Naive thymus-derived CD4-positive, alpha-beta T cell (primary cell): ENCODE measurements at regions of chr11 and their contacts with region 1.

Region 1: GRCh38 chr11:95790123-95790932 is at the start of gene CEP57:
- DNase-seq: peak; percentile 80 to 98 (median 96)
- ATAC-seq: peak; percentile 70
- H3K4me3 ChIP-seq: peak within 1 kb of the TSS; percentile 97
- H3K4me3 Mint-ChIP-seq: peak within 1 kb of the TSS; percentile 93 to 100 (median 100)
- H3K27ac ChIP-seq: peak within 1 kb of the TSS; percentile 99
- H3K27ac Mint-ChIP-seq: peak within 1 kb of the TSS; percentile 100
- H3K4me1 ChIP-seq: peaks cover 21 to 22% of the 10 kb centered on the region in 2 donors
- H3K4me1 Mint-ChIP-seq: peaks cover 47 to 74% (median 61%) of the 10 kb centered on the region in 7 donors
- H3K27me3 ChIP-seq: no peaks in the 10 kb centered on the region
- H3K27me3 Mint-ChIP-seq: no peaks in the 10 kb centered on the region
- total RNA-seq, gene CEP57: 47.8 to 72.3 (median 68.9) TPM

Region 2: GRCh38 chr11:94128746-94129511 is 1661.4 kb before region 1 on chr11 and contains the start of gene PANX1:
- CTCF ChIA-PET with region 1: no interaction called
- POLR2A ChIA-PET with region 1: no interaction called
- intact Hi-C with region 1: loop called (anchors 2 to 10 kb)
- DNase-seq: peak; percentile 48 to 80 (median 74)
- ATAC-seq: peak; percentile 87
- H3K4me3 ChIP-seq: peak within 1 kb of the TSS; percentile 97
- H3K4me3 Mint-ChIP-seq: peak within 1 kb of the TSS in 2 of 10 donors; percentile 85 to 92
- H3K27ac ChIP-seq: peak within 1 kb of the TSS; percentile 73
- H3K27ac Mint-ChIP-seq: peak within 1 kb of the TSS; percentile 77 to 96 (median 89)
- H3K4me1 ChIP-seq: peaks cover 21 to 29% of the 10 kb centered on the region in 2 donors
- H3K4me1 Mint-ChIP-seq: peaks cover 18 to 32% (median 27%) of the 10 kb centered on the region in 7 donors
- H3K27me3 ChIP-seq: no peaks in the 10 kb centered on the region
- H3K27me3 Mint-ChIP-seq: no peaks in the 10 kb centered on the region
- total RNA-seq, gene PANX1: 5.6 to 14.8 (median 6.1) TPM

Region 3: GRCh38 chr11:95089620-95090542 is 700.4 kb before region 1 on chr11 and contains the start of gene ENDOD1:
- CTCF ChIA-PET with region 1: no interaction called
- POLR2A ChIA-PET with region 1: interaction called, 20 read pairs
- intact Hi-C with region 1: loop called (anchors 1 kb)
- DNase-seq: peak; percentile 81 to 89 (median 87)
- ATAC-seq: peak; percentile 98
- H3K4me3 ChIP-seq: peak within 1 kb of the TSS; percentile 79
- H3K4me3 Mint-ChIP-seq: peak within 1 kb of the TSS; percentile 86 to 95 (median 92)
- H3K27ac ChIP-seq: peak within 1 kb of the TSS; percentile 87
- H3K27ac Mint-ChIP-seq: peak within 1 kb of the TSS; percentile 96 to 99 (median 98)
- H3K4me1 ChIP-seq: peaks cover 16 to 31% of the 10 kb centered on the region in 2 donors
- H3K4me1 Mint-ChIP-seq: peaks cover 24 to 61% (median 49%) of the 10 kb centered on the region in 7 donors
- H3K27me3 ChIP-seq: no peaks in the 10 kb centered on the region
- H3K27me3 Mint-ChIP-seq: no peaks in the 10 kb centered on the region
- total RNA-seq, gene ENDOD1: 4.7 to 23.2 (median 8.6) TPM

Region 4: GRCh38 chr11:95556342-95557163 is 233.8 kb before region 1 on chr11:
- CTCF ChIA-PET with region 1: no interaction called
- POLR2A ChIA-PET with region 1: no interaction called
- intact Hi-C with region 1: no loop called
- DNase-seq: peak in 1 of 9 donors; percentile 38
- ATAC-seq: no peak
- H3K4me3 ChIP-seq: no peak overlapping the region
- H3K4me3 Mint-ChIP-seq: peak overlapping the region in 1 of 10 donors; percentile 58
- H3K27ac ChIP-seq: no peak overlapping the region
- H3K27ac Mint-ChIP-seq: peak overlapping the region in 3 of 9 donors; percentile 7 to 75 (median 12)
- H3K4me1 ChIP-seq: no peaks in the 10 kb centered on the region
- H3K4me1 Mint-ChIP-seq: peaks cover 0 to 38% (median 12%) of the 10 kb centered on the region in 7 donors
- H3K27me3 ChIP-seq: no peaks in the 10 kb centered on the region
- H3K27me3 Mint-ChIP-seq: peaks cover 0 to 4% (median 0%) of the 10 kb centered on the region in 5 donors

Region 5: DNA sequence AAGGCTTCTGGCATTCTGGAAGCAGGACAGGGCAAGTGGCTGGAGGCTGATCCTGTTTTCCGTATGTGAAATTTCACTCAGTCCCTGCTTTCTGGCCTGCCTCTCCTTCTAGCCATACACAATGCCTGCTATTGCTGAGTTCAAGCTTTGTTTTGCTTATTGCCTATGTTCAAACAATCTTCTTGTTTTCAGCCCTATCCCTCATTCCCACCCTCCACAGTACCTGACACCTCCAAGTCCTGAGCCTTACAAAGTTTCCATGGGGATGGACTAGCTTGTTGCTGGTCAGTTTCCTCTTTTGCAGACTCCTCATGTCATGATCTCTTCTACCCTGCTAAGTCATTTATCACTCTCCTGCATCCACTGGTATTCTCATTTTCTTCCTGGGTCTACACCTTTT is 38.8 kb before region 1 on chr11:
- CTCF ChIA-PET with region 1: no interaction called
- POLR2A ChIA-PET with region 1: no interaction called
- intact Hi-C with region 1: no loop called
- DNase-seq: no peak
- ATAC-seq: no peak
- H3K4me3 ChIP-seq: no peak overlapping the region
- H3K4me3 Mint-ChIP-seq: no peak overlapping the region
- H3K27ac ChIP-seq: no peak overlapping the region
- H3K27ac Mint-ChIP-seq: no peak overlapping the region
- H3K4me1 ChIP-seq: no peaks in the 10 kb centered on the region
- H3K4me1 Mint-ChIP-seq: no peaks in the 10 kb centered on the region
- H3K27me3 ChIP-seq: no peaks in the 10 kb centered on the region
- H3K27me3 Mint-ChIP-seq: peaks cover 0 to 27% (median 6%) of the 10 kb centered on the region in 5 donors

Region 6: DNA sequence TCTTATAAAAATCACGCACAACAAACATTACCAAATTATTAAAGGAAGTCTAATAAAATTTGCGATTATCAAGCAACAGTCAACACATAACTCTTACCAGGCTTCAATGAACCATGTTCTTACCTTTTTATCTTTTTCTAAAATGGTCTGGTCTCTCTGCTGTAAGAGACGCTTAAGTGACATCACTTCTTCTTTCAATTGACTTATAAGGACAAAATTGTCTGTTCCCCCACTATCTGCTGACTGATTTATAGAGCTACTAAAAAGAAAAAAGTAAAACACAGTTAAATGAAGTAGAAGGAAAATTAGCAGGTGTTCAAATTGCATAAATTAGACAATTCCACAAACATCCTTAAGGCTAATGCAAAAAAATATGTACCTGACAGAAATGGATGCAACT is 11.6 kb before region 1 on chr11:
- CTCF ChIA-PET with region 1: interaction called, 4 read pairs
- POLR2A ChIA-PET with region 1: interaction called, 11 read pairs
- intact Hi-C with region 1: loop called in 1 of 2 experiments (anchors 1 kb)
- DNase-seq: no peak
- ATAC-seq: no peak
- H3K4me3 ChIP-seq: no peak overlapping the region
- H3K4me3 Mint-ChIP-seq: no peak overlapping the region
- H3K27ac ChIP-seq: no peak overlapping the region
- H3K27ac Mint-ChIP-seq: peak overlapping the region in 4 of 9 donors; percentile 11 to 46 (median 34)
- H3K4me1 ChIP-seq: peaks cover 0 to 7% of the 10 kb centered on the region in 2 donors
- H3K4me1 Mint-ChIP-seq: peaks cover 0 to 38% (median 22%) of the 10 kb centered on the region in 7 donors
- H3K27me3 ChIP-seq: no peaks in the 10 kb centered on the region
- H3K27me3 Mint-ChIP-seq: no peaks in the 10 kb centered on the region

Region 7: GRCh38 chr11:96073536-96073935 is 283.2 kb after region 1 on chr11:
- CTCF ChIA-PET with region 1: no interaction called
- POLR2A ChIA-PET with region 1: no interaction called
- intact Hi-C with region 1: no loop called
- DNase-seq: no peak
- ATAC-seq: no peak
- H3K4me3 ChIP-seq: no peak overlapping the region
- H3K4me3 Mint-ChIP-seq: no peak overlapping the region
- H3K27ac ChIP-seq: no peak overlapping the region
- H3K27ac Mint-ChIP-seq: peak overlapping the region in 1 of 9 donors; percentile 32
- H3K4me1 ChIP-seq: peaks cover 0 to 13% of the 10 kb centered on the region in 2 donors
- H3K4me1 Mint-ChIP-seq: peaks cover 30 to 72% (median 53%) of the 10 kb centered on the region in 7 donors
- H3K27me3 ChIP-seq: no peaks in the 10 kb centered on the region
- H3K27me3 Mint-ChIP-seq: no peaks in the 10 kb centered on the region

Region 8: DNA sequence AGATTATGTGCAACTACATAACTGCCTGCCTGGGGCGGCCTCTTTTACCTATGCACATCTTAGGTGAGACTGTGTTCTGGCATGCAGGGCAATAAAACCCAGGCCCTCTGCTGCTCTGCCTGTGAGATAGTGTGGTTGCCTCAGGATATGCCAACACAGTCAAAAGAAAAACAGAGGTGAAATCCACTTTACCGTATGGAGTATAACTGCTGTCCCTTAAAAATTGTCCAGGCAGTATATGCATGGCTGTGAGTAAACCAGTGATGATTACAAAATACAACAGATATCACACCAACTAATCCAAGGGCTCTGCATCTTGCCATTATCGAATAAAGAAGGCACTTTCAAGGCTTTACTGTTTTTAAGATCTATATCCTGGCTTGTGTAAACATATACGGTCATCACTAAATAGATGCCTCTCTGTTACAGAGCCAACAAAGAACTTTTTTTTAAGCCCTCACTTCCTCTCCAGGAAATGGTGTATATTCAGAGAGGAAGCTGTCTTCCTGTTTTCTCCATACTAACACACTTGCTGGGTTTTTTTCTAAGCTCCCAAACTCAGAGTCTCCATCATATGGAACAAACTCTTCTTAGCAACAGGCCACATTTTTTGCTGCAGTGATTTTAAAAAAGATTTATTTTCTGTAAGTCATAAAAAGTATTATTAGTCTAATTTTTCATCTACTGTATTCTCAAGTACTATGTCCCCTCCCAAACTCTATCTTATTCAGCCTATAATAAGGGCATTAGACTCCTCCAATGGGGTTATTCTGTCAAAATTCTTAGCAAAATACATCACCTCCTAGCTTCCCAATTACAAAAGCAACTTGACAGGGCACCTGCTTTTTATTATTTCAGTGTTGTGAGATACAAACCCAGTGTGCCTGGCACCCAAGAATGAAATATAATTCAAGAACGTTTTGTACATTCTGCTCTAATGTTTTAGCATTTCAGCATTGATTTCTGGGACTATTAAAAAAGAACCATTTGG is 417.4 kb after region 1 on chr11:
- CTCF ChIA-PET with region 1: no interaction called
- POLR2A ChIA-PET with region 1: no interaction called
- intact Hi-C with region 1: loop called in 1 of 2 experiments (anchors 1 kb)
- DNase-seq: peak in 7 of 9 donors; percentile 43 to 73 (median 57)
- ATAC-seq: peak; percentile 70
- H3K4me3 ChIP-seq: peak overlapping the region; percentile 9
- H3K4me3 Mint-ChIP-seq: peak overlapping the region; percentile 51 to 84 (median 74)
- H3K27ac ChIP-seq: peak overlapping the region; percentile 62
- H3K27ac Mint-ChIP-seq: peak overlapping the region; percentile 86 to 99 (median 95)
- H3K4me1 ChIP-seq: peaks cover 70 to 93% of the 10 kb centered on the region in 2 donors
- H3K4me1 Mint-ChIP-seq: peaks cover 45 to 96% (median 92%) of the 10 kb centered on the region in 7 donors
- H3K27me3 ChIP-seq: no peaks in the 10 kb centered on the region
- H3K27me3 Mint-ChIP-seq: no peaks in the 10 kb centered on the region

Region 9: GRCh38 chr11:96389720-96390487 is 599.6 kb after region 1 on chr11 and contains the starts of genes CCDC82 and JRKL:
- CTCF ChIA-PET with region 1: interaction called, 6 read pairs
- POLR2A ChIA-PET with region 1: interaction called, 10 read pairs
- intact Hi-C with region 1: loop called (anchors 1 kb)
- DNase-seq: peak; percentile 96 to 99 (median 98)
- ATAC-seq: peak; percentile 99
- H3K4me3 ChIP-seq: peak within 1 kb of the TSS; percentile 66
- H3K4me3 Mint-ChIP-seq: peak within 1 kb of the TSS; percentile 84 to 99 (median 94)
- H3K27ac ChIP-seq: peak within 1 kb of the TSS; percentile 86
- H3K27ac Mint-ChIP-seq: peak within 1 kb of the TSS; percentile 71 to 97 (median 91)
- H3K4me1 ChIP-seq: peaks cover 17 to 18% of the 10 kb centered on the region in 2 donors
- H3K4me1 Mint-ChIP-seq: peaks cover 32 to 66% (median 60%) of the 10 kb centered on the region in 7 donors
- H3K27me3 ChIP-seq: no peaks in the 10 kb centered on the region
- H3K27me3 Mint-ChIP-seq: no peaks in the 10 kb centered on the region
- total RNA-seq, gene CCDC82: 21.9 to 46.2 (median 32.0) TPM
- total RNA-seq, gene JRKL: 5.4 to 17.3 (median 10.1) TPM